Sigmoid colon (tissue), 7 donors: ENCODE measurements at regions of chr5 and their contacts with region 1.

Region 1: DNA sequence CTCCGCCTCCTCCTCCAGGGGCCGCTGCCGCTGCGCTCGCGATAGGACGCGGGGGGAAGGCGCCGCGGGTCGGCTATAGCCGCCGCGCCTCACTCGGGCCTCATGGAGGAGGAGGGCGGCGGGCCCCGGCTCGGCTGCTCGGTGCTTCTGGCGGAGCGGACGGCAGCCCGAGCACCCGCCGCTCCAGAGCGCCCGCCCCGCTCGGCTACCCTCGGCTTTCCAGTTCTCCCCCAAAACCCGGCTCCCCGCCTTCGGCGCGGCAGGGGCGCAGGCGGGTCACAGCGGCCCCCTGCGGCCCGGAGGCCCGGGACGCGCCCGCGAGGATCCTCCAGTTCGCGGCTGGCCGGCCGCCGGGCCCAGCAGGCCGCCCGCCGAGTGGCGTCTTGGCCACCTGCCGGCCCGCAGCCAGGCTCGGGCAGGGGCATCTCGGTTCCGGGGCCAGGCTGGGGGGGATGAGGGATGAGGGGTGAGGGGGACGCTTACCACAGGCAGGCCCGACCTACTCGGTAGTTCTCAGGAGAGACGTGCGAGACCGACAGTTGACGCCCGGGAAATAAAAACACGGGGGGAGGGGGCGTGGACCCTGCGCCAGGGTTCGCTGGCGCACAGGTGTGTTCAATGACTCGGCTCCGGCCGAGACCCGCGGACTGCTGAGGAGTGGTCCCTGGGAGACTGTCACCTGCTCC is at the start of gene PAIP1:
- DNase-seq: peak; percentile 91
- H3K4me3 ChIP-seq: peak within 1 kb of the TSS; percentile 78 to 85 (median 84)
- H3K27ac ChIP-seq: peak within 1 kb of the TSS; percentile 92 to 97 (median 96)
- H3K4me1 ChIP-seq: peaks cover 0 to 44% (median 37%) of the 10 kb centered on the region in 4 donors
- H3K27me3 ChIP-seq: no peaks in the 10 kb centered on the region
- CTCF ChIP-seq: peak in 2 of 4 experiments; percentile 4 to 75
- EP300 ChIP-seq: no peak
- POLR2A ChIP-seq: peak in 1 of 2 donors; percentile 7
- total RNA-seq, gene PAIP1: 89.9 to 123 (median 112) TPM

Region 2: DNA sequence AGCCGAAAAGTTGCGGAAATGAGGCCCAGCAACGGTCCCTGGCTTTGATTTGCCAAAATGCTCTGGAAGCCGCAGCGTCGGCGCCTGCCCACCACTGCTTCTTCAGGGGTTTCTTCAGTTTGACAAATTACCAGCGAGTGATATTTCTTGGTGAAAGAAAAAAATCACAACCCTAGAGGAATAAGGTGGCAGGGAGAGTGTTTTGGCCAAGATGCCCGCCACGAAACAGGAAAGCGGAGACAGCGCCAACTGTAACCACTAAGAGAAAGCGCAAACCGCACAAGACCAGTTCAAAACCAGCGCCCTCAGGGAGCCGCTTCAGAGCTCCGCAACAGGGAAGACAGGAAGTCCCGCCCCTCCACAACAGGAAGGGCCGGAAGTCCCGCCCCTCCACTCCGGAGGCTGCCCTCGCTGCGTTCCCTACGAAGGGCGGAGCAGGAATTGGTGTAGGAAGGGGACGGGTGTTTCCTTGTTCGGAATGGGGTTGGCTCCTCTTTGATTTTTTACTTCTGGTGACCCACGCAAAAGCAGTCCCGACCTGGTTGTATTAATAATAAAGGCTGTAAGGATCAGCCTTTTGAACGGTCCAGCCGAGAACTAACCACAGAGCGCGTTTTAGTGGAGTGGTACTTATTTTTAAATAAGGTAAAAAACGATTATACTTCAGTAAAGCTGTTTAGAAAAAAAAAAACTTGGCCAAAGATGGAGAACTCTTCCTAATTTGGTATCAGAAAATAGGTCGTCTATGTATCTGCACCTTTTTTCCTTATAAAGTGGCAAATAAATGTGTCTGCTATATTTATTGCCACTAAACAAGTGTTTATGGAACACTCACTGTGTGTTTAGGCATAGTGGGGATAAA is 42.0 kb before region 1 on chr5 and contains the start of gene C5orf34:
- intact Hi-C with region 1: loop called (anchors 5 kb)
- DNase-seq: peak; percentile 98
- H3K4me3 ChIP-seq: peak within 1 kb of the TSS; percentile 49 to 67 (median 62)
- H3K27ac ChIP-seq: peak within 1 kb of the TSS; percentile 84 to 91 (median 88)
- H3K4me1 ChIP-seq: peaks cover 0 to 24% (median 20%) of the 10 kb centered on the region in 4 donors
- H3K27me3 ChIP-seq: no peaks in the 10 kb centered on the region
- CTCF ChIP-seq: no peak
- EP300 ChIP-seq: no peak
- POLR2A ChIP-seq: peak; percentile 59 to 64
- total RNA-seq, gene C5orf34: 1.1 to 4.3 (median 1.8) TPM

Region 3: GRCh38 chr5:43602461-43603343 is 45.7 kb after region 1 on chr5 and contains the start of gene NNT:
- intact Hi-C with region 1: loop called (anchors 1 kb)
- DNase-seq: peak; percentile 87
- H3K4me3 ChIP-seq: peak within 1 kb of the TSS; percentile 71 to 93 (median 84)
- H3K27ac ChIP-seq: peak within 1 kb of the TSS; percentile 89 to 96 (median 92)
- H3K4me1 ChIP-seq: peaks cover 0 to 35% (median 23%) of the 10 kb centered on the region in 4 donors
- H3K27me3 ChIP-seq: no peaks in the 10 kb centered on the region
- CTCF ChIP-seq: no peak
- EP300 ChIP-seq: no peak
- POLR2A ChIP-seq: no peak
- total RNA-seq, gene NNT: 48.5 to 80.3 (median 73.7) TPM

Region 4: DNA sequence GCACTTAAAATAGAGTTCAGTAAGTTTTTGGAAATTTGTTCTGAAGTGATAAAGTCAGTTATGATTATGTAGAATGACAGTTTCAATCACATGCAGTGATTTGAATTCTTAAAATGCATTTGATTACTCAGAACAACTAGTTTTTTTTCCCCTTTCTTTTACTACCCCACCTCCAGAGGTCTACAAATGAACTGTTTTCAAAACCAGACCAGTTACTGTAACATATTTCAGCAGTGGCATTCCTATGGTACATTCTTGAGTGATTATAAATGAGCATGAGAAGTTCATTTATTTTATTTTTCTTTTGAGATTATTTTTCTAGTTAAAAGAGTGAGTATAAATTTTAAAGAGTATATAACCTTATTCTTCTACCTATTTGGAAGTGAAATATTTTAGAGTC is 117.5 kb after region 1 on chr5:
- intact Hi-C with region 1: no loop called
- DNase-seq: no peak
- H3K4me3 ChIP-seq: no peak overlapping the region
- H3K27ac ChIP-seq: no peak overlapping the region
- H3K4me1 ChIP-seq: peaks cover 0 to 13% (median 0%) of the 10 kb centered on the region in 4 donors
- H3K27me3 ChIP-seq: no peaks in the 10 kb centered on the region
- CTCF ChIP-seq: no peak
- EP300 ChIP-seq: no peak
- POLR2A ChIP-seq: no peak

Region 5: DNA sequence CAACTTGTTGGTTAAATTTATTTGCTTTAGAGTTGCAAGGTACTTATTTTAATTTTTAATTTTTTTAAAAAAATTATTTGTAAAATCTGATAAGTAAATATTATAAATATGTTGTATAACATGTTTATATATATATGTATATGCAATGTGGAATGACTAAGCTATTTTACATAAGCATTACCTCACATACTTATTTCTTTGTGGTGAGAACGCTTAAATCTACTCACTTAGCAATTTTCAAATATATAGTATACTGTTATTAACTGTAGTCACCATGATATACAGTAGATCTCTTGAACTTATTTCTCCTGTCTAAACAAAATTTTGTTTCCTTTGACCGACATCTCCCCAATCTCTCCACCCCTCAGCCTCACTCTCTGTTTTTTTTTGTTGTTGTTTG is 193.8 kb after region 1 on chr5:
- intact Hi-C with region 1: no loop called
- DNase-seq: no peak
- H3K4me3 ChIP-seq: no peak overlapping the region
- H3K27ac ChIP-seq: no peak overlapping the region
- H3K4me1 ChIP-seq: no peaks in the 10 kb centered on the region
- H3K27me3 ChIP-seq: no peaks in the 10 kb centered on the region
- CTCF ChIP-seq: no peak
- EP300 ChIP-seq: no peak
- POLR2A ChIP-seq: no peak